HepG2 (cell line): ENCODE measurements at regions of chr12 and their contacts with region 1.

Region 1: GRCh38 chr12:7060353-7060954 is at the start of gene C1S:
- DNase-seq: peak; percentile 93
- ATAC-seq: peak; percentile 93
- H3K4me3 ChIP-seq: peak within 1 kb of the TSS in 2 of 3 experiments; percentile 6 to 27; a peak in 3 of 6 replicates
- H3K27ac ChIP-seq: peak within 1 kb of the TSS; percentile 30
- H3K4me1 ChIP-seq: peaks cover 64% of the 10 kb centered on the region
- H3K27me3 ChIP-seq: no peaks in the 10 kb centered on the region
- CTCF ChIP-seq: peak; percentile 94
- EP300 ChIP-seq: peak in 1 of 2 experiments; percentile 37; a peak in 1 of 4 replicates
- POLR2A ChIP-seq: no peak
- RAD21 ChIP-seq: peak; percentile 96
- total RNA-seq, gene C1S: 8.2 and 18.2 TPM in 2 replicates

Region 2: DNA sequence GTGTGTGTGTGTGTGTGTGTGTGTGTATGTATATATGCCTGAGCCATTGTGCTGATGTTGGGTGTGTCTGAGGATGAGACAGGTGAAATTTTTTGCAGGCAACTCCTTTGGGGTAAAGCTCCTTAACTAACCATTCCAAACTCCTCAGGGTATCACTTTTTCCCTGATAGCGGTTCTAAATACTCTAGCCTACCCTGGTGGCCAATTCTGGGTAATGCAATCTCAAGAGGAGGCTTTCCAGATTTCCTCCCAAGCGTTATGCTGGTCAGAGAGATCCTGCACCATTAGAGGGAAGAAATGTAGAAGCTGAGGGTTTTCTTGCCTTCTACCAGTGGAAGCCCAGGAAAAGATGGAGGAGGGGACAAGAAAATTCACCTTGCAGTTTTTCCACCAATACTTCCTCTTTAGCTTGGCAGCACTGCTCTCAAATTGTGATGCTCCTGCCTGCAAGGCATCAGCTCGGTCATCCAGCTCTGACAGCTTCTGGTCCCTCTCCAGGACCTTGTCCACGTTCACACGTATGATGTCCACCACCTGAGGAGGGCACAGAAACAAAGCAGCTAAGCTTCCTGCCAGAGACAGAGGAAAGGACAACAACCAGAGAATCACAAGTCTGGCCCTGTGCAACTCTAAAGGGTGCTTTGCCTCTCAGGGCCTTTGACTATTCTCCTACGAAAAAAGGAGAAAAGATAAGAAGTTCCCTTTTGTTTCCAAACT is 594.8 kb before region 1 on chr12:
- CTCF ChIA-PET with region 1: no interaction called
- POLR2A ChIA-PET with region 1: no interaction called
- in situ Hi-C with region 1: no loop called
- intact Hi-C with region 1: no loop called
- DNase-seq: peak; percentile 56
- ATAC-seq: peak; percentile 42; the same call in 2 of the 3 replicates
- H3K4me3 ChIP-seq: no peak overlapping the region
- H3K27ac ChIP-seq: no peak overlapping the region
- H3K4me1 ChIP-seq: peaks cover 29% of the 10 kb centered on the region
- H3K27me3 ChIP-seq: no peaks in the 10 kb centered on the region
- CTCF ChIP-seq: peak; percentile 83
- EP300 ChIP-seq: no peak
- POLR2A ChIP-seq: no peak
- RAD21 ChIP-seq: peak; percentile 80

Region 3: DNA sequence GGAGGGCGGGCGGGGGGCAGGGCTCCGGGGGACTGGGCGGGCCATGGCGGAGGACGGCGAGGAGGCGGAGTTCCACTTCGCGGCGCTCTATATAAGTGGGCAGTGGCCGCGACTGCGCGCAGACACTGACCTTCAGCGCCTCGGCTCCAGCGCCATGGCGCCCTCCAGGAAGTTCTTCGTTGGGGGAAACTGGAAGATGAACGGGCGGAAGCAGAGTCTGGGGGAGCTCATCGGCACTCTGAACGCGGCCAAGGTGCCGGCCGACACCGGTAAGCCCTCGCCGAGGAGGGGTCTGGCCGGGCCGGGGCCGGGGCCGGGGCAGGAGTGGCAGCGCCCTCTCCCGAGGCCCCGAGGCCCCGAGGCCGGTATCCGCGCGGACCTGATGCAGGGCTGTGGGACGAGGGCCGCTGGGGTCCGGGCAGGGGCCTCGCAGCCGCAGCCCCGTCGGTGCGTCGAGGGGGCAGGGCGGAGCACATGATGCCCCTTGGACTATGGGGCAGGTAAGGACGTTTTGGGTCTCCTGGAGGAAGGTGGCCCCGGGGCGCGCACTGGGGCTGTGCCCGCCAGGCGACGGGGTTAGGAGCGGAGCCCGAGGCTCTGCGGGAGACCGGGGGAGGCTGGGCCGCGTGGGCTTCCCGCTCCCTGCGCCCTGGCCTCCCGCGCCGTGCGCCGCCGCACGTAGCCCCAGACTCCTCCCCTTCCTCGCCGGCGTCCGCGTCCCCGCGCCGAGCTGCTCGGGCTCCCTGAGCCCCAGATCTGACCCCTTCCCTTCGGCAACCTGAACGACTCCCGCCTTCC is 192.8 kb before region 1 on chr12 and contains the start of gene TPI1:
- CTCF ChIA-PET with region 1: no interaction called
- POLR2A ChIA-PET with region 1: no interaction called
- in situ Hi-C with region 1: no loop called
- intact Hi-C with region 1: no loop called
- DNase-seq: peak; percentile 39
- ATAC-seq: peak; percentile 73
- H3K4me3 ChIP-seq: peak within 1 kb of the TSS; percentile 88 to 96 (median 92)
- H3K27ac ChIP-seq: peak within 1 kb of the TSS; percentile 87
- H3K4me1 ChIP-seq: peaks cover 45% of the 10 kb centered on the region
- H3K27me3 ChIP-seq: no peaks in the 10 kb centered on the region; a peak in 1 of 5 replicates
- CTCF ChIP-seq: peak; percentile 5; the same call in 1 of the 2 replicates
- EP300 ChIP-seq: no peak
- POLR2A ChIP-seq: peak in 1 of 2 experiments; percentile 98; a peak in 2 of 4 replicates
- RAD21 ChIP-seq: peak; percentile 59
- total RNA-seq, gene TPI1: 945 and 1,237 TPM in 2 replicates

Region 4: DNA sequence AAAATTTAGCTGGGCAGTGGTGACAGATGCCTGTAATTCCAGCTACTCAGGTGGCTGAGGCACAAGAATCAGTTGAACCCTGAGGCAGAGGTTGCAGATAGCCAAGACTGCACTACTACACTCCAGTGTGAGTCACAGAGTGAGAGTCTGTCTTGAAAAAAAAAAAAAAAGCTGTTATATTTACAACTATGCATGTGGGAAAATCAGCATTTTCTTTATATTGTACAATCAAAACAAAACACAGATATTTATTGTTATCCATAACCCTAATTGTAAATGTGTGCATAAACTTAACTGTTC is 19.3 kb after region 1 on chr12:
- CTCF ChIA-PET with region 1: interaction called, 3 read pairs
- POLR2A ChIA-PET with region 1: no interaction called
- in situ Hi-C with region 1: no loop called
- intact Hi-C with region 1: loop called (anchors 2 kb)
- DNase-seq: no peak
- ATAC-seq: no peak
- H3K4me3 ChIP-seq: no peak overlapping the region
- H3K27ac ChIP-seq: peak overlapping the region; percentile 38
- H3K4me1 ChIP-seq: peaks cover 25% of the 10 kb centered on the region
- H3K27me3 ChIP-seq: no peaks in the 10 kb centered on the region
- CTCF ChIP-seq: no peak
- EP300 ChIP-seq: no peak
- POLR2A ChIP-seq: no peak
- RAD21 ChIP-seq: no peak

Region 5: DNA sequence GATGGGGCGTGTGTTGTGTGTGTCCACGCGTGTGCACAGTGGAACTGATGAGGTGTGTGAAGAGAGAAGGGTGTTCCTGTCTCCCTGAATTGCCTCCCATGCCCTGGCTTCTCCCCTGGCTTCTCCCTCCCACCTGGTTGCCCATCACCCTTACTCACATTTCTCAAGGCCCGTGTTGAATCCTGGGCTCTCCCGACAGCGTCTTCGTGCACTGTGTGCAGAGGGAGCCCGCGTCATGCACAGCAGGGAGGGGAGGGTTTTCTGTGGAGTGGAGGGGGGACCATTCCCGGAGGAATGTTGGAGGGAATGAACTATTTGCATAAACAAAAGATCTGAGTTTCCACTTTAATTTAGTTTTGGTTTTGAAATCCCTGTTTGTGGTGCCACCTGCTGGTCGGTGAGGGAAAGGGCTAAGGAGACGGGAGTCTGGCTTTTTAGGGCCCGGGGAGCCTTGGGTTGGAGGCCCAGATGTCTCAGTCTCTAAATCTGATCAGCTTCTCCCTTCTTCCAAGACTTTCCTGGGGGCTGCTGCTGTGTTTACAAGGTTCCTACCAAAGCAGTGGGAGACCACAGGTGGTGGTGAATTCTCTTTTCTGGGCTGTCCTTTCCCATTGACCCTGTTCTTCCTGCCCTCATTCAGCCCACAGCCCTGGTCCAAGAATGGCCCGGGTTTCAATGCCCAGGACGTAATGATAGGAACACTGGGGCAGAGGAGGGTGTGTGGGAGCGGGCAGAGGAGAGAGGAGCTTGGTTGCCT is 32.0 kb after region 1 on chr12 and contains the start of gene C1R:
- CTCF ChIA-PET with region 1: interaction called, 45 read pairs
- POLR2A ChIA-PET with region 1: interaction called, 5 read pairs
- in situ Hi-C with region 1: loop called (anchors 5 kb)
- intact Hi-C with region 1: loop called (anchors 1 kb)
- DNase-seq: peak; percentile 48
- ATAC-seq: peak; percentile 52
- H3K4me3 ChIP-seq: peak within 1 kb of the TSS; percentile 53 to 68 (median 53); a peak in 5 of 6 replicates
- H3K27ac ChIP-seq: no peak within 1 kb of the TSS
- H3K4me1 ChIP-seq: peaks cover 27% of the 10 kb centered on the region
- H3K27me3 ChIP-seq: peaks cover 0 to 2% of the 10 kb centered on the region in 2 experiments; a peak in 1 of 5 replicates
- CTCF ChIP-seq: peak; percentile 86
- EP300 ChIP-seq: no peak
- POLR2A ChIP-seq: no peak; a peak in 1 of 4 replicates
- RAD21 ChIP-seq: peak; percentile 68
- total RNA-seq, gene C1R: 1.7 and 3.5 TPM in 2 replicates

Region 6: GRCh38 chr12:7129872-7130680 is 69.6 kb after region 1 on chr12 and contains the start of gene CLSTN3:
- CTCF ChIA-PET with region 1: no interaction called
- POLR2A ChIA-PET with region 1: interaction called, 3 read pairs
- in situ Hi-C with region 1: no loop called
- intact Hi-C with region 1: loop called (anchors 1 kb)
- DNase-seq: peak; percentile 69
- ATAC-seq: peak; percentile 69
- H3K4me3 ChIP-seq: peak within 1 kb of the TSS; percentile 76 to 92 (median 88)
- H3K27ac ChIP-seq: peak within 1 kb of the TSS; percentile 92
- H3K4me1 ChIP-seq: peaks cover 61% of the 10 kb centered on the region
- H3K27me3 ChIP-seq: no peaks in the 10 kb centered on the region; a peak in 1 of 5 replicates
- CTCF ChIP-seq: no peak
- EP300 ChIP-seq: no peak
- POLR2A ChIP-seq: peak; percentile 33 to 83; a peak in 3 of 4 replicates
- RAD21 ChIP-seq: no peak; the same call in 1 of the 2 replicates
- total RNA-seq, gene CLSTN3: 10.8 and 26.2 TPM in 2 replicates

Region 7: GRCh38 chr12:7142056-7142644 is 81.7 kb after region 1 on chr12:
- CTCF ChIA-PET with region 1: interaction called, 5 read pairs
- POLR2A ChIA-PET with region 1: no interaction called
- in situ Hi-C with region 1: no loop called
- intact Hi-C with region 1: loop called (anchors 1 kb)
- DNase-seq: peak; percentile 41
- ATAC-seq: peak; percentile 87
- H3K4me3 ChIP-seq: no peak overlapping the region
- H3K27ac ChIP-seq: no peak overlapping the region
- H3K4me1 ChIP-seq: no peaks in the 10 kb centered on the region; the same call in 1 of the 2 replicates
- H3K27me3 ChIP-seq: no peaks in the 10 kb centered on the region
- CTCF ChIP-seq: peak; percentile 80
- EP300 ChIP-seq: no peak
- POLR2A ChIP-seq: no peak
- RAD21 ChIP-seq: 0 out of 2 replicates have a peak, but pooled peaks have one; percentile 20